Left cardiac atrium (tissue), 4 donors: ENCODE measurements at regions of chr2 and their contacts with region 1.

Region 1: DNA sequence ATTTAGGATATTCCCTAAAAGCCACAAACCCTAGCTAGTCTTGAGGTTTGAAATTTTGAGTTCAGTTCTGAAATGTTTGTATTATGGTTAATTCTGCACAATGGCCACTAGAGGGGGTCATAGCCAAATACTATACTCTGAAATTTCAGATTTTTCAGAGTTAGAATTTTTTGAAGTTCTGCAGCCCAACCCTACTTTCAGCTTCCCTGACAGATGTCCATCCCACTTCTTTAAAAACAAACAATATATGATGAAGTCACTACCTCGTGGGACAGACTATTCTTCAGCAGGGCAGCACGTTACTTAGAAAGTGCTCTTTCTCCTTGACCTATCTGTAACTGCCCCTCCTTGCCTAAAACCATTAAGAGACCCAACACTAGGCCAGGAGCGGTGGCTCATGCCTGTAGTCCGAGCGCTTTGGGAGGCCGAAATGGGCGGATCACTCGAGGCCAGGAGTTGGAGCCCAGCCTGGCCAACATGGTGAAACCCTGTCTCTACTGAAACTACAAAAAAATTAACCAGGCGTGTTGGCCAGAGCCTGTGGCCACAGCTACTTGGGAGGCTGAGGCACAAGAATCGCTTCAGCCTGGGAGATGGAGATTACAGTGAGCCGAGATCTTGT is 48.2 kb upstream of the PAPOLG start:
- DNase-seq: no peak
- ATAC-seq: peak in 1 of 2 donors; percentile 30

Region 2: GRCh38 chr2:60756191-60757041 is 48.6 kb after region 1 on chr2 and contains the start of gene PAPOLG:
- intact Hi-C with region 1: loop called in 1 of 2 experiments (anchors 5 kb)
- DNase-seq: peak; percentile 98
- ATAC-seq: peak; percentile 100
- total RNA-seq, gene PAPOLG: 7.2 to 10.0 TPM

Region 3: GRCh38 chr2:60998628-60999545 is 291.0 kb after region 1 on chr2:
- intact Hi-C with region 1: loop called (anchors 2 to 5 kb)
- DNase-seq: no peak
- ATAC-seq: peak in 1 of 2 donors; percentile 38